Sciatic nerve (tissue), 2 donors: ENCODE measurements at regions of chr7 and their contacts with region 1.

Region 1: GRCh38 chr7:104317948-104318629 is 10.3 kb upstream of the LHFPL3 start:
- DNase-seq: no peak
- ATAC-seq: no peak

Region 2: GRCh38 chr7:104217620-104218019 is 100.5 kb before region 1 on chr7:
- intact Hi-C with region 1: no loop called
- DNase-seq: no peak
- ATAC-seq: no peak

Region 3: DNA sequence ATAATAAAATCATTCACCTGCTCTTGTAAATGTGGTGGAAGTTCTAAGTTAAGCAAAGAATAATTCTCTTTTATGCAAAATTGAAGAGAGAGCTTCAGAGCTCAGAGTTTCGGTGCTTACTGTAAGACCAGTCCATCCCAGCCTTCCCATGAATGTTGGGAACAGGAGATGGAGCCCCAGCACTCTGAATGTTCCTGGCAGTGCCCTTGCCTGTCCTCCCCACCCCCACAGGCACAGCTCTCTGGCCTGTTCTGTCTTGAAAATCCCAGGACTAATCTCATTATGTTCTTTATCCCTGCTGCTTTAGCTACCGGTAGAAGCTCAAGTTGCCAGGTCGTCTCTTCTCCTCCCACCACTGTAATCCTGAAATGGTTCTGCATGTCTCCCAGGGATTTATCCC is 18.8 kb before region 1 on chr7:
- intact Hi-C with region 1: loop called (anchors 1 kb)
- DNase-seq: no peak
- ATAC-seq: no peak

Region 4: DNA sequence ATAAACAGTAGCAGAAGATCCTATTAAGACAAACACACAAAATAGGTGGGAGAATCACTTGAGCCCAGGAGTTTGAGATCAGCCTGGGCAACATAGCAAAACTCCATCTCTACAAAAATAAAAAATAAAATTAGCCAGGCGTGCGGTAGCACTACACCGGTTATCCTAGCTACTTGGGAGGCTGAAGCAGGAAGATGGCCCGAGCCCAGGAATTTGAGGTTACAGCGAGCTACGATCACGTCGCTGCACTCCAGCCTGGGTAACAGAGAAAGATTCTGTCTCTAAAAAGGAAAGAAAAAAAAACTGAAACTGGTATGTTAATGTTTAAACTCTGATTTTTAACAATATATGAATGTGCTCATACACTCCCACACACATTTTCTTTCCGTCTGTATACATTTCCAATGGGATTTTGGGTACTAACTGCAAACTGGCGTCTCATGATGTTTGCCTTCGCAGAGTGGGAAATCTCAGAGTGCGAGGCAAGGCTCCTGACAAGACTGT is 555.3 kb after region 1 on chr7:
- intact Hi-C with region 1: no loop called
- DNase-seq: no peak
- ATAC-seq: peak; percentile 52